PC-9 (cell line): ENCODE measurements at regions of chr3 and their contacts with region 1.

Region 1: GRCh38 chr3:55631848-55632247 is 144.7 kb upstream of the WNT5A start:
- DNase-seq: no peak
- H3K4me3 ChIP-seq: no peak overlapping the region
- H3K27ac ChIP-seq: no peak overlapping the region
- H3K4me1 ChIP-seq: peaks cover 40% of the 10 kb centered on the region
- H3K27me3 ChIP-seq: no peaks in the 10 kb centered on the region
- CTCF ChIP-seq: no peak

Region 2: GRCh38 chr3:55492976-55493375 is 138.9 kb before region 1 on chr3:
- CTCF ChIA-PET with region 1: no interaction called
- POLR2A ChIA-PET with region 1: no interaction called
- intact Hi-C with region 1: no loop called
- DNase-seq: no peak
- H3K4me3 ChIP-seq: no peak overlapping the region
- H3K27ac ChIP-seq: no peak overlapping the region
- H3K4me1 ChIP-seq: peaks cover 26% of the 10 kb centered on the region
- H3K27me3 ChIP-seq: no peaks in the 10 kb centered on the region
- CTCF ChIP-seq: no peak

Region 3: GRCh38 chr3:55648591-55649318 is 16.9 kb after region 1 on chr3:
- CTCF ChIA-PET with region 1: no interaction called
- POLR2A ChIA-PET with region 1: interaction called, 10 read pairs
- intact Hi-C with region 1: no loop called
- DNase-seq: no peak
- H3K4me3 ChIP-seq: no peak overlapping the region
- H3K27ac ChIP-seq: no peak overlapping the region
- H3K4me1 ChIP-seq: no peaks in the 10 kb centered on the region
- H3K27me3 ChIP-seq: no peaks in the 10 kb centered on the region
- CTCF ChIP-seq: no peak